MCF 10A (cell line): ENCODE measurements at regions of chr5 and their contacts with region 1.

Region 1: GRCh38 chr5:54310433-54311175 is at the start of gene ARL15:
- DNase-seq: peak; percentile 98
- H3K4me3 Mint-ChIP-seq: peak within 1 kb of the TSS; percentile 88
- H3K27ac Mint-ChIP-seq: peak within 1 kb of the TSS; percentile 86
- H3K4me1 Mint-ChIP-seq: peaks cover 17% of the 10 kb centered on the region
- H3K27me3 Mint-ChIP-seq: no peaks in the 10 kb centered on the region
- CTCF ChIP-seq: no peak
- total RNA-seq, gene ARL15: 10.1 and 11.3 TPM in 2 replicates

Region 2: DNA sequence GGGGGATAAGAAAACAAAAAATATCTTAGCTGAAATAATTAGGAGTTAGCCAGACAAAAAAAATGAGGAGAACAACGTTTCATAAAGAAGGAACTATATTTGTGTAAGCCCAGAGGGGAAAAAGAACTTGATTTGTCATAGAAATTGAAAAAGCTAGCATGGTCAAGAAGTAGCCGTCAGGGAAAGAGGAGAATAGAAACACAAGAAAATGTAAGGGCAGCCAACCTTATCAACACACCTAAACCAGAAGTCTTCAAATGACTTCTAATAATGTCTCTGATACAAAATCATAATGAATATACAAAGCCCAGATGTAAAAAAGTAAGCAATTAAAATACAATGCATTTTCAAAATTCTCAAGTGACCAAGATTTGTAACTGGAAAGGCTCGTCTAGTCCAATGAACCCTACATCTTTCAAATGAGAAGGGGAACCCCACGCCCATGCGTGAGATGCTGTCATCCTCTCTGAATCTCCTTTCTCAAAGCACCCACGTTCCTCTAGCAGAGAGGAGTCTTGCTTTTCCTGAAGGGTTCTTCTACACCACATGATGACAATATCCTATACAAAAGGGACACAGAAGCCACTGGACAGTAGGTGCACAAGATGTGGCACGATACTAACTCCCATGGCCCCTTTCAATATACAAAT is 103.9 kb before region 1 on chr5:
- CTCF ChIA-PET with region 1: no interaction called
- POLR2A ChIA-PET with region 1: no interaction called
- intact Hi-C with region 1: no loop called
- DNase-seq: no peak
- H3K4me3 Mint-ChIP-seq: no peak overlapping the region
- H3K27ac Mint-ChIP-seq: no peak overlapping the region
- H3K4me1 Mint-ChIP-seq: no peaks in the 10 kb centered on the region
- H3K27me3 Mint-ChIP-seq: no peaks in the 10 kb centered on the region
- CTCF ChIP-seq: no peak

Region 3: DNA sequence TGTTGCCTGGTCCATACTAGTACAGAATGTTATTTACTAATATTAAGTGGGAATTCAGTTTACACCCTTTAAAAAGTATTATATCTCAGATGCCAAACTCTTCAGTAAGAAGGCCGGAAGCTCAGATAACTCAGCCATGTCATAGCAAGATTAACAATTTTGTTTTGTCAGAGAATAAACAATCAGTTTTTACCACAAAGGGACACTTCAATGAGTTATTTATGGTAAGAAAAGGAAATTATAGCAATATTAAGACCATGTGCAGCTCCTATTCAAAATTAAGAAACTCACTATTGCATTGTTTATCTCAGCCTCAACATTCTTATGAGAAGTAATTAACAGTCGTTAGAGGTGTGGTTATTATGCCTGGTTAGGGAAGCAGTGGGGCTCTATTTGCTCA is 12.9 kb after region 1 on chr5:
- CTCF ChIA-PET with region 1: interaction called, 4 read pairs
- POLR2A ChIA-PET with region 1: interaction called, 28 read pairs
- intact Hi-C with region 1: no loop called
- DNase-seq: no peak
- H3K4me3 Mint-ChIP-seq: no peak overlapping the region
- H3K27ac Mint-ChIP-seq: no peak overlapping the region
- H3K4me1 Mint-ChIP-seq: no peaks in the 10 kb centered on the region
- H3K27me3 Mint-ChIP-seq: no peaks in the 10 kb centered on the region
- CTCF ChIP-seq: no peak

Region 4: GRCh38 chr5:54329731-54330709 is 19.4 kb after region 1 on chr5:
- CTCF ChIA-PET with region 1: interaction called, 5 read pairs
- POLR2A ChIA-PET with region 1: interaction called, 28 read pairs
- intact Hi-C with region 1: no loop called
- DNase-seq: peak; percentile 75
- H3K4me3 Mint-ChIP-seq: no peak overlapping the region
- H3K27ac Mint-ChIP-seq: no peak overlapping the region
- H3K4me1 Mint-ChIP-seq: peaks cover 16% of the 10 kb centered on the region
- H3K27me3 Mint-ChIP-seq: no peaks in the 10 kb centered on the region
- CTCF ChIP-seq: no peak

Region 5: GRCh38 chr5:54360089-54360488 is 49.5 kb after region 1 on chr5:
- CTCF ChIA-PET with region 1: no interaction called
- POLR2A ChIA-PET with region 1: interaction called, 16 read pairs
- intact Hi-C with region 1: no loop called
- DNase-seq: peak; percentile 63
- H3K4me3 Mint-ChIP-seq: no peak overlapping the region
- H3K27ac Mint-ChIP-seq: no peak overlapping the region
- H3K4me1 Mint-ChIP-seq: peaks cover 15% of the 10 kb centered on the region
- H3K27me3 Mint-ChIP-seq: no peaks in the 10 kb centered on the region
- CTCF ChIP-seq: no peak

Region 6: GRCh38 chr5:54401515-54401914 is 90.9 kb after region 1 on chr5:
- CTCF ChIA-PET with region 1: interaction called, 5 read pairs
- POLR2A ChIA-PET with region 1: interaction called, 85 read pairs
- intact Hi-C with region 1: no loop called
- DNase-seq: no peak
- H3K4me3 Mint-ChIP-seq: no peak overlapping the region
- H3K27ac Mint-ChIP-seq: no peak overlapping the region
- H3K4me1 Mint-ChIP-seq: peaks cover 21% of the 10 kb centered on the region
- H3K27me3 Mint-ChIP-seq: no peaks in the 10 kb centered on the region
- CTCF ChIP-seq: no peak

Region 7: GRCh38 chr5:54415896-54416601 is 105.4 kb after region 1 on chr5:
- CTCF ChIA-PET with region 1: interaction called, 28 read pairs
- POLR2A ChIA-PET with region 1: interaction called, 24 read pairs
- intact Hi-C with region 1: loop called (anchors 1 kb)
- DNase-seq: peak; percentile 26
- H3K4me3 Mint-ChIP-seq: no peak overlapping the region
- H3K27ac Mint-ChIP-seq: no peak overlapping the region
- H3K4me1 Mint-ChIP-seq: peaks cover 14% of the 10 kb centered on the region
- H3K27me3 Mint-ChIP-seq: no peaks in the 10 kb centered on the region
- CTCF ChIP-seq: no peak